Activated CD4-positive, alpha-beta T cell treated with anti-CD3 and anti-CD28 coated beads, Interleukin-2, amount 10 ng/mL, durations not matched to agents 24 days and 14 days (primary cell): ENCODE measurements at regions of chr19 and their contacts with region 1.

Region 1: GRCh38 chr19:16283210-16284061 is 41.2 kb upstream of the KLF2 start:
- DNase-seq: peak; percentile 84
- H3K4me3 Mint-ChIP-seq: peak overlapping the region; percentile 74
- H3K27ac Mint-ChIP-seq: peak overlapping the region; percentile 63
- H3K4me1 Mint-ChIP-seq: peaks cover 27% of the 10 kb centered on the region
- H3K27me3 Mint-ChIP-seq: peaks cover 38% of the 10 kb centered on the region

Region 2: GRCh38 chr19:16111160-16111908 is 172.1 kb before region 1 on chr19 and contains the start of gene RAB8A:
- intact Hi-C with region 1: no loop called
- DNase-seq: peak; percentile 100
- H3K4me3 Mint-ChIP-seq: peak within 1 kb of the TSS; percentile 95
- H3K27ac Mint-ChIP-seq: peak within 1 kb of the TSS; percentile 95
- H3K4me1 Mint-ChIP-seq: peaks cover 26% of the 10 kb centered on the region
- H3K27me3 Mint-ChIP-seq: no peaks in the 10 kb centered on the region
- total RNA-seq, gene RAB8A: 227 and 247 TPM in 2 replicates

Region 3: DNA sequence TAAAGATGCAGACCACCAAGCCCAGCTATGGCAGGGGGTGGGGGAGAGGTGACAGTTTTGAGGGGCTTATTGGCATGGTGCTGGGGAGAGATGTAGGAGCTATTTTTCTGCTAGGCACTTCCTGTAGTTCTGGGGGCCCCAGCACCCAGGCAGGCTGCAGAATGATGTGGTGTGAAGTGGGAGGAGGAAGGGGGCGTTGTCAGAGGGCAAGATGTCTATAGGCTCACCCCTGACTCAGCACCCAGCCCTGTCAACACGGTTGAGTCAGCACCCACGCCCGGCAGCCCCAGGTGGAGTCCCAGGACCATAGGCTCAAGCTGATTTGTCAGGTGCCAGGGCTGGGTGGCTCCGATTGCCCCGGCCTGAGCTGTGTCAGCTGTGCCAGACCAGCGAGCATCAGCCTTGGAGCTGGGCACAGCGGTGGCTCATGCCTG is 46.9 kb after region 1 on chr19:
- intact Hi-C with region 1: loop called (anchors 2 kb)
- DNase-seq: peak; percentile 96
- H3K4me3 Mint-ChIP-seq: peak overlapping the region; percentile 87
- H3K27ac Mint-ChIP-seq: peak overlapping the region; percentile 63
- H3K4me1 Mint-ChIP-seq: peaks cover 54% of the 10 kb centered on the region
- H3K27me3 Mint-ChIP-seq: peaks cover 16% of the 10 kb centered on the region